ENCODE measurements at regions of chr4 and their contacts with region 1.

Region 1: GRCh38 chr4:168585168-168586091 is 88.6 kb downstream of the PALLD start:
- DNase-seq: peak; percentile 78
- H3K4me3 ChIP-seq: no peak overlapping the region
- H3K27ac ChIP-seq: no peak overlapping the region
- H3K4me1 ChIP-seq: peaks cover 14% of the 10 kb centered on the region
- H3K27me3 ChIP-seq: no peaks in the 10 kb centered on the region
- CTCF ChIP-seq: peak; percentile 58 to 80
- POLR2A ChIP-seq: no peak

Region 2: DNA sequence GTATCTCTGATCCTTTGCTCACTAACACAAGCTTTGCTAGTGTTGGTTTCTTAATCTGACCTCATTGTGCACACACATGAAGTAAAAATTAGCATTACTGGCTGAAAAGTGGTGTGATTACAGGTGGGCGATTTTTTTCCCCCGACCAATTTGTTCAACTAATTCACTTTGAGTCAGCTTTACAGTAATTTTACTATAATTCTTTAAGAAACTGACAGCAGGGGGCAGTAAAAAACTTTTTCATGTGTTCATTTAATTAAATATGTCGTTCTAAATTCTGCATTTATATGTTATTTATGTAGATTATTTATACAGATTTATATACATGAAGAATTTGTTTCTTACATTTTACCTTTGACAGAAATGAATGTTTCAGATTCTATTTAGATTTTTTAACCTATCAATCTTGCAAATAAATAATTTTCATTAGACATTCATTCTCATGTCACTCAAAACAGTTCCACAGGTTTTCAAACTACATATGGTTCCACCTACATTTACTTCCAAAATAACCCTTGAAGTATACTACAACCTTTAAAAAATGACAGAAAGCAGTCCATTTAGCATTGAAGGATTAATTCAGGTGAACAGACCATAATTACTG is 71.1 kb before region 1 on chr4:
- CTCF ChIA-PET with region 1: interaction called, 42 read pairs
- POLR2A ChIA-PET with region 1: no interaction called
- dilution Hi-C with region 1: no loop called
- intact Hi-C with region 1: loop called (anchors 1 kb)
- DNase-seq: peak; percentile 65
- H3K4me3 ChIP-seq: no peak overlapping the region
- H3K27ac ChIP-seq: no peak overlapping the region
- H3K4me1 ChIP-seq: no peaks in the 10 kb centered on the region
- H3K27me3 ChIP-seq: no peaks in the 10 kb centered on the region
- CTCF ChIP-seq: peak in 1 of 2 donors; percentile 24
- POLR2A ChIP-seq: no peak

Region 3: GRCh38 chr4:168612450-168613139 is 27.2 kb after region 1 on chr4:
- CTCF ChIA-PET with region 1: interaction called, 10 read pairs
- POLR2A ChIA-PET with region 1: no interaction called
- dilution Hi-C with region 1: no loop called
- intact Hi-C with region 1: no loop called
- DNase-seq: peak; percentile 88
- H3K4me3 ChIP-seq: no peak overlapping the region
- H3K27ac ChIP-seq: peak overlapping the region; percentile 43
- H3K4me1 ChIP-seq: peaks cover 24% of the 10 kb centered on the region
- H3K27me3 ChIP-seq: no peaks in the 10 kb centered on the region
- CTCF ChIP-seq: no peak
- POLR2A ChIP-seq: no peak

Region 4: DNA sequence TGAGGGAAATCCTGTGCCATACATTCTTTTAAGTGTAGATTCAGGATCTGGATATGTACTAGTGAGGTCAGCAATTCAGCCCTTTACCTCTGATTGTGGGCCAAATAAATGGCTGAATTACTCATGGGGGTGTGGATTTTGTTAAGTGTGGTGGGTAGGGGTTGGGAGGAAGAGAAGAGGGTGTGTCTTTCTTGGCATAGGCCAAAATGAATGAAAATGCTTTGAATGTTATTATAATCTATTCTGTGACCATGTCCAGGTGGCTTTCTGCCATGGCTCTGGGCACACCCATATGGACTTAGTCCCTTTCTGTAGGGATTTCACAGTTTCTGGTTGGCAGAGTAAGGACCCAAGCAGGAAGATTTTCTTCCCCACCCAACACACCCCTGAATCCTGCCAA is 180.3 kb after region 1 on chr4:
- CTCF ChIA-PET with region 1: interaction called, 3 read pairs
- POLR2A ChIA-PET with region 1: no interaction called
- dilution Hi-C with region 1: no loop called
- intact Hi-C with region 1: loop called (anchors 5 kb)
- DNase-seq: peak; percentile 42
- H3K4me3 ChIP-seq: no peak overlapping the region
- H3K27ac ChIP-seq: no peak overlapping the region
- H3K4me1 ChIP-seq: peaks cover 19% of the 10 kb centered on the region
- H3K27me3 ChIP-seq: no peaks in the 10 kb centered on the region
- CTCF ChIP-seq: no peak
- POLR2A ChIP-seq: no peak

Region 5: GRCh38 chr4:168831919-168832762 is 246.7 kb after region 1 on chr4:
- CTCF ChIA-PET with region 1: interaction called, 22 read pairs
- POLR2A ChIA-PET with region 1: no interaction called
- dilution Hi-C with region 1: no loop called
- intact Hi-C with region 1: loop called (anchors 1 kb)
- DNase-seq: peak; percentile 78
- H3K4me3 ChIP-seq: peak overlapping the region; percentile 72 to 88 (median 81)
- H3K27ac ChIP-seq: peak overlapping the region; percentile 73
- H3K4me1 ChIP-seq: peaks cover 17% of the 10 kb centered on the region
- H3K27me3 ChIP-seq: no peaks in the 10 kb centered on the region
- CTCF ChIP-seq: no peak
- POLR2A ChIP-seq: peak; percentile 94

Region 6: GRCh38 chr4:168917138-168917779 is 331.8 kb after region 1 on chr4:
- CTCF ChIA-PET with region 1: interaction called, 58 read pairs
- POLR2A ChIA-PET with region 1: interaction called, 3 read pairs
- dilution Hi-C with region 1: loop called (anchors 25 kb)
- intact Hi-C with region 1: loop called (anchors 1 kb)
- DNase-seq: peak; percentile 65
- H3K4me3 ChIP-seq: no peak overlapping the region
- H3K27ac ChIP-seq: no peak overlapping the region
- H3K4me1 ChIP-seq: no peaks in the 10 kb centered on the region
- H3K27me3 ChIP-seq: no peaks in the 10 kb centered on the region
- CTCF ChIP-seq: peak in 1 of 2 donors; percentile 25
- POLR2A ChIP-seq: no peak